Breast epithelium (tissue), 4 donors: ENCODE measurements at regions of chr7 and their contacts with region 1.

Region 1: DNA sequence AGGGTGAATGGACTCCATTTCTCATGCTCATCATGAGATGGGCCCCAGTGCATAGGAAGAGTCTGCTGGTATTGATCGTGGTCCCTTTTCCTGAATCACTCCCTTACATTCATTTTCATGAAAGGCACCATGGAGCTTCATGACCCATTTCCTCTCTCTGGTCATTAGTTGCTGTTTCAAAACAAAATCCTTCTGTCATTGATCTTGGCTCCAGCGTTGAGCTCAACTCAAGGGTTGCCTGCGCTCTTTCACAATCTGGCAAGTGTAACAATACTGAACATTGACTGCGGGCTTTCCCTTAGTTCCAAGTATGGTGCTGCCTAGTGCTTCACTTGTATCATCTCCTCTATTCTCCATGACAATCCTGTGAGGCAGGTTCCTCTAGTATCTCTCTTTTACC is 197.6 kb downstream of the TMEM178B start:
- DNase-seq: no peak
- H3K4me3 ChIP-seq: no peak overlapping the region
- H3K27ac ChIP-seq: no peak overlapping the region
- H3K4me1 ChIP-seq: no peaks in the 10 kb centered on the region
- H3K27me3 ChIP-seq: no peaks in the 10 kb centered on the region
- CTCF ChIP-seq: no peak
- POLR2A ChIP-seq: no peak

Region 2: DNA sequence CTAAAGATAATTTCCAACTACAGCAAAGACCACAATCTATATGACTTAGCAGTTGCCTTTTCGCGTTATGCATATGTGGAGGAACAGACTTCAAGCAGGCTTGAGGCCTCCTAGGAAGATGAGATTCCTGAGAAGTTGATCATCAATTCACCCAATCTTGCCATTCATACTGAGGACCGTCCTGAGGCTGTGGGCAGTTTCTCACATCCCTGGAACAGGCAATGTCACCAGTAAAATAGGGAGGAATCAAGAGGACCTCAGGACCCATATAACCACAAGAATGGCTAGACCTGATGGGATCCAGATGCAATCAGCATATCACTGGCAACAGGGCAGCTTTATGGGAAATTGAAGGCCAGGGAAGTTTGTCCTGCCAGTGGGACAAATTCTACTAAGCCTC is 1112.0 kb before region 1 on chr7:
- intact Hi-C with region 1: no loop called
- DNase-seq: no peak
- H3K4me3 ChIP-seq: no peak overlapping the region
- H3K27ac ChIP-seq: no peak overlapping the region
- H3K4me1 ChIP-seq: no peaks in the 10 kb centered on the region
- H3K27me3 ChIP-seq: no peaks in the 10 kb centered on the region
- CTCF ChIP-seq: no peak
- POLR2A ChIP-seq: no peak

Region 3: GRCh38 chr7:141235656-141236055 is 35.8 kb before region 1 on chr7:
- intact Hi-C with region 1: loop called (anchors 2 kb)
- DNase-seq: no peak
- H3K4me3 ChIP-seq: no peak overlapping the region
- H3K27ac ChIP-seq: no peak overlapping the region
- H3K4me1 ChIP-seq: no peaks in the 10 kb centered on the region
- H3K27me3 ChIP-seq: no peaks in the 10 kb centered on the region
- CTCF ChIP-seq: no peak
- POLR2A ChIP-seq: no peak